ENCODE measurements at regions of chr16 and their contacts with region 1.

Region 1: DNA sequence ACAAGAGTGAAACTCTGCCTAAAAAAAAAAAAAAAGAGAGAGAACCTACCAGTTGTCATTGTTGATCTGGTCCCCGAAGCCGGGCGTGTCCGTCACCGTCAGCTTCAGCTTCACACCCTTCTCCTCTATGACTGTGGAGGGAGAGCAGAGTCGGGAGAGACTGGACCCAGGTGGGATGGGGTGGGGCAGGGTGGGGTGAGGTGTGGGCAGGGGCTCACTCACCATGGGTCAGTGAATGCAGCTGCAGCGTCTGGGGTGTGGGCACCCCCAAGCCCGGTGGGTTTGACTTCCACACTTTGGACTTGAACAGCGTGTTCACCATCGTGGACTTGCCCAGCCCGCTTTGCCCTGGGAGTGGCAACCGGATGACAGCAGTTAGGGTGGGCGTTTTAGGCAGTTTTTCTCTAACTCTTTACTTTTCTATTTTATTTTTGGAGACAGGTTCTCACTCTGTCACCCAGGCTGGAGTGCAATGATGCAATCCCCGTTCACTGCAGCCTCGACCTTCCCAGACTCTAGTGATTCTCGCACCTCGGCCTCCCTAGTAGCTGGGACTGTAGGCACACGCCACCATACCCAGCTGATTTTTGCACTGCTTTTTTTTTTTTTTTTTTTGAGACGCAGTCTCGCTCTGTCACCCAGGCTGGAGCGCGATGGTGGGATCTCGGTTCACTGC is 2.2 kb downstream of the SEPTIN12 start:
- DNase-seq: no peak
- ATAC-seq: no peak
- H3K4me3 ChIP-seq: no peak overlapping the region
- H3K4me3 Mint-ChIP-seq: no peak overlapping the region
- H3K27ac ChIP-seq: no peak overlapping the region
- H3K27ac Mint-ChIP-seq: no peak overlapping the region
- H3K4me1 ChIP-seq: no peaks in the 10 kb centered on the region
- H3K4me1 Mint-ChIP-seq: peaks cover 1% of the 10 kb centered on the region
- H3K27me3 ChIP-seq: peaks cover 0 to 3% (median 0%) of the 10 kb centered on the region in 4 experiments
- H3K27me3 Mint-ChIP-seq: no peaks in the 10 kb centered on the region
- CTCF ChIP-seq: no peak

Region 2: DNA sequence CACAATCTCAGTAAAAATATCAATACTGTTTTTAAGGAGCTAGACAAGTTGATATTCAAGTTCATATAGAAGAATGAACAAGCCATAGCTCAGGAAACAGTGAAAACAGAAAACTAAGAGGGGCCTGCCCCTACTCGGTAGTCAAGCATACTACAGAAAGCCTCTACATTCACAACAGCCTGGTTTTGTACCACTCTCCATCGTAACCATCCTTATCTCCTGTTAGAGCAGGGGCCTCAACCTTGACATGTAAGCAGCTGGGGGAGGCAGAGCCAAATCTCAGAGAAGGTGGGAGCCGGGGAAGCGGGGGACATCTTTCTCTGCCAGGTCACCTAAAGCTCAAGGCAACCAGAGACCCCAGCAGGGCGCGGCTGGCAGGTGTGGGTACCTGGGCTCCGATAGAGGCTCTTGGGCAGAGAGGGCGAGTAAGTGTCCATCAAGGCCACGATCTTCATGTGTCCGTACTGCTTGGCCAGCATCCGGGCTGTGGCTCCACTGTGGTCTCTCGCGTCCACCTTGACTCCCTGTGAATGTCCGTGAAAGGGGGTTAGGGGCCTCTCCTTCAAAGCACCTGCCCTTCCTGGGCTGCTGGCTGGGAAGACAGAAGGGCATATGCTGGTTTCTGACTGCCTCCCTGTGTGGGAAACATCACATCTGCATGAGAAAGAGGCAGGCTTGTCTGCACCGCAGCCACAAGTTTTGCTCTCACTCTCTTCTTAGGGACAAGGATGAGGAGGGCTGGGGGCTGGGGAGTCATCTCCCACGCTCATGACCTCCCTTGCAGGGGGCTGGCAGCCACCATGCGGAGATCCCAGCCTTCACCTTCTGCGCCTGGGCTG is 72.0 kb before region 1 on chr16:
- CTCF ChIA-PET with region 1: no interaction called
- POLR2A ChIA-PET with region 1: no interaction called
- intact Hi-C with region 1: no loop called
- DNase-seq: no peak
- ATAC-seq: no peak
- H3K4me3 ChIP-seq: no peak overlapping the region
- H3K4me3 Mint-ChIP-seq: no peak overlapping the region
- H3K27ac ChIP-seq: no peak overlapping the region
- H3K27ac Mint-ChIP-seq: no peak overlapping the region
- H3K4me1 ChIP-seq: peaks cover 0 to 8% of the 10 kb centered on the region in 2 donors
- H3K4me1 Mint-ChIP-seq: peaks cover 8% of the 10 kb centered on the region
- H3K27me3 ChIP-seq: no peaks in the 10 kb centered on the region
- H3K27me3 Mint-ChIP-seq: no peaks in the 10 kb centered on the region
- CTCF ChIP-seq: no peak

Region 3: GRCh38 chr16:5045499-5046115 is 259.7 kb after region 1 on chr16:
- CTCF ChIA-PET with region 1: no interaction called
- POLR2A ChIA-PET with region 1: interaction called, 12 read pairs
- intact Hi-C with region 1: no loop called
- DNase-seq: no peak
- ATAC-seq: no peak
- H3K4me3 ChIP-seq: no peak overlapping the region
- H3K4me3 Mint-ChIP-seq: no peak overlapping the region
- H3K27ac ChIP-seq: no peak overlapping the region
- H3K27ac Mint-ChIP-seq: no peak overlapping the region
- H3K4me1 ChIP-seq: peaks cover 0 to 4% of the 10 kb centered on the region in 2 donors
- H3K4me1 Mint-ChIP-seq: peaks cover 2% of the 10 kb centered on the region
- H3K27me3 ChIP-seq: peaks cover 0 to 12% (median 0%) of the 10 kb centered on the region in 4 experiments
- H3K27me3 Mint-ChIP-seq: peaks cover 16% of the 10 kb centered on the region
- CTCF ChIP-seq: no peak

Measured in B cell (primary cell).